ENCODE measurements at regions of chr4 and their contacts with region 1.

Region 1: GRCh38 chr4:163484906-163485305 is 9.6 kb upstream of the TMA16 start:
- DNase-seq: peak; percentile 43
- H3K4me3 ChIP-seq: no peak overlapping the region
- H3K27ac ChIP-seq: no peak overlapping the region
- H3K4me1 ChIP-seq: no peaks in the 10 kb centered on the region
- H3K27me3 ChIP-seq: no peaks in the 10 kb centered on the region
- CTCF ChIP-seq: peak; percentile 57

Region 2: GRCh38 chr4:163544407-163545038 is 59.6 kb after region 1 on chr4:
- intact Hi-C with region 1: loop called (anchors 5 kb)
- DNase-seq: peak; percentile 61
- H3K4me3 ChIP-seq: peak overlapping the region; percentile 19
- H3K27ac ChIP-seq: no peak overlapping the region
- H3K4me1 ChIP-seq: no peaks in the 10 kb centered on the region
- H3K27me3 ChIP-seq: no peaks in the 10 kb centered on the region
- CTCF ChIP-seq: peak; percentile 91

Measured in colonic mucosa (tissue), 4 donors.